ENCODE measurements at regions of chr11 and their contacts with region 1.

Region 1: GRCh38 chr11:63769714-63770455 is 1.3 kb upstream of the ZFTA start:
- DNase-seq: peak in 1 of 2 donors; percentile 15
- ATAC-seq: no peak

Region 2: DNA sequence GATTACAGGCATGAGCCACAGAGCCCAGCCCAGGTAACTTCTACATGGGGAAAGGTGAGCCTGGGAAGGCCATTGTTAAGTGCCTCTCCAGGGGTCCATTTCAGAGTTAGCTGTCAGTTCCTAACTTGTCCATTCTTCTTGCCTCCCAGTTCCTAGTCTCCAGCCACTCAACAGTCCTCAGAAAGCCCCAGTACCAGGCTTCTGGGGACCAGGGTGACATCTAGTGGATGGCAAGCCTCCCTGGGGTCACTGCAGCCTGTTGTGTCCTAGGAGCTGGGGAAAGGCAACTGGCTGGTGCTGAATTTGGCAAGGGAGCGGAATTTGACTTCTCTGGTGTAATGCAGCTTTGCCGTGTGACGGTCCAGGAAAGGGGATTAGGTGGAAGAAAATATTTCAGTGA is 261.9 kb before region 1 on chr11:
- intact Hi-C with region 1: no loop called
- DNase-seq: peak in 1 of 2 donors; percentile 31
- ATAC-seq: peak; percentile 71

Region 3: DNA sequence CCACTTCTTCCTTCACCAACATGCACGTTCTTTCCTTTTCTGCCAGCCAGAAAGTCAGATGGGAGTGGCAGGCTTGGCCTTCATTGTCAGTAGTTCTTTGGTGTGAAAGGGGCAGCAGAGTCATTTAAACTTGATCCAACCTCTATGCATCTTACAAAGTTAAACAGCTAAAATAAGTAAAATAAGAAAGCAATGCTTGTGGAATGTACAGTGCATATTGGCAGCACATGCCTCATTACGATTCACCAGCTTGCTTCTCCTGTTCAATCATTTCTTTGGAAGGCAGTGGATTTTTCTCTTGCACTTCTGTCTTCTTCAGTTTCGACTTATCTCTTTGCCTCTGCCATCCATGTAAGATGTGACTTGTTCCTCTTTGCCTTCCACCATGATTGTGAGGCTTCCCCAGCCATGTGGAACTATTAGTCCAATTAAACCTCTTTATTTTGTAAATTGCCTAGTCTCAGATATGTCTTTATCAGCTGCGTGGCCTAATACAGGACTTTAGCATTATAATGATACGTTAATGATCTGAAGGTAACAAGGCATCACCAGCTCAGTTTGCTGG is 249.2 kb before region 1 on chr11:
- intact Hi-C with region 1: no loop called
- DNase-seq: no peak
- ATAC-seq: no peak

Region 4: GRCh38 chr11:63945477-63946163 is 175.7 kb after region 1 on chr11:
- intact Hi-C with region 1: loop called in 1 of 2 experiments (anchors 10 kb)
- DNase-seq: peak; percentile 65 to 69
- ATAC-seq: peak; percentile 85

Measured in left colon (tissue), 2 donors.